ENCODE measurements at regions of chr16 and their contacts with region 1.

Region 1: GRCh38 chr16:3400779-3401688 is at the starts of genes ZNF174 and ZSCAN32:
- DNase-seq: peak; percentile 99
- H3K4me3 Mint-ChIP-seq: peak within 1 kb of the TSS; percentile 91
- H3K27ac Mint-ChIP-seq: peak within 1 kb of the TSS; percentile 76
- H3K4me1 Mint-ChIP-seq: peaks cover 18% of the 10 kb centered on the region
- H3K27me3 Mint-ChIP-seq: no peaks in the 10 kb centered on the region
- total RNA-seq, gene ZNF174: 9.2 and 11.1 TPM in 2 replicates
- total RNA-seq, gene ZSCAN32: 13.2 and 16.1 TPM in 2 replicates

Region 2: DNA sequence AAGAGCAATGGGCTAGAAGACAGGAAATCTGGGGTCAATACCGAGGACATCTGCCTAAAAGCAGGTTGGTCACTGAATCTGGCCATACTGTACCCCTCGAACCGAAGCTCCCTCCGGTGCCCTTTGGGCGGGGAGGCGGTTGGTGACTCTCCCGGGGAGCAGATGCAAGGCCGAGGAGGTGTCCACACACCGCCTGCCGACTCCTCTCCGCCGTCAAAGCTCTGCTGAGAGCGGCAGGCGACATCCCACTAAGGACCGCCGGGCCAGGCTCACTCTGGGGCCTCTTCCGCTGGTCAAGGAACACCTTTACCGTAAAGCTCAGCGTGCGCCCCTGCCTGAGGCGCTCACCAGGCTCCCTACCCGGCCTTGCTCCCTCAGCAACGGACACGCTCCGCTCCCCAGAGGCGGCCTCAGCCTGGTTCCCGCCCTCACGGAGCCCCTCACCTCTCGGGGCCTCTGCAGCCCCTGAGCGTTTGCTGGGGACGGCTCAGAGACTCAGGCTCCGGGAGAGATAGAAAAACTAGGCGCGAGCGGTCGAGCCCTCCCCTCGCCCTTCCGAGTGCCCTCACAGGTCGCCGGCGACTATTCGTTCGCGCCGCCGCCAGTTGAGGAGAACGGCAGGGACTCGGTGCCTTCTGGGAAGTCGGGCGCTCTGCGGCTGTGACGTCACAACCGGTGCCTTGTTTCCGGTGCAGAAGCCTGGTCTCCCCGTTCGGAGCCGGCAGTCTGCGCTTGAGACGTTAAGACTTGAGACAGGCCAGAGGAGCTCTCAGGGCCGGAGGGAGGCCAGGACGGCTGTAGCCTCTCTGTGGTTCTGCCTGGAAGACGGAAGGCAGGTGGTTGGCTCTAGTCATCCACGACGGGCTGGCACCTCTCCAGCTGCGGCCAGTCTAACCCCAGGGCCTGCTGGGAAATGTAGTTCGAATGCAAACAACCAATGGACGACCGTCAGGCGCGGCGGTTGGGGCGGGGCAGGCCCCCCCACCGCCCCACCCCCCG is 166.2 kb before region 1 on chr16 and contains the start of gene ZNF200:
- intact Hi-C with region 1: loop called (anchors 2 kb)
- DNase-seq: peak; percentile 91
- H3K4me3 Mint-ChIP-seq: peak within 1 kb of the TSS; percentile 97
- H3K27ac Mint-ChIP-seq: peak within 1 kb of the TSS; percentile 91
- H3K4me1 Mint-ChIP-seq: peaks cover 15% of the 10 kb centered on the region
- H3K27me3 Mint-ChIP-seq: peaks cover 2% of the 10 kb centered on the region
- total RNA-seq, gene ZNF200: 11.0 and 12.2 TPM in 2 replicates

Region 3: GRCh38 chr16:3264137-3265036 is 136.6 kb before region 1 on chr16:
- intact Hi-C with region 1: loop called (anchors 1 kb)
- DNase-seq: peak; percentile 97
- H3K4me3 Mint-ChIP-seq: peak overlapping the region; percentile 89
- H3K27ac Mint-ChIP-seq: peak overlapping the region; percentile 88
- H3K4me1 Mint-ChIP-seq: peaks cover 8% of the 10 kb centered on the region
- H3K27me3 Mint-ChIP-seq: no peaks in the 10 kb centered on the region

Region 4: GRCh38 chr16:3305109-3306068 is 95.6 kb before region 1 on chr16 and contains the starts of genes TIGD7 and ZNF75A:
- intact Hi-C with region 1: loop called (anchors 1 kb)
- DNase-seq: peak; percentile 83
- H3K4me3 Mint-ChIP-seq: peak within 1 kb of the TSS; percentile 77
- H3K27ac Mint-ChIP-seq: peak within 1 kb of the TSS; percentile 78
- H3K4me1 Mint-ChIP-seq: peaks cover 8% of the 10 kb centered on the region
- H3K27me3 Mint-ChIP-seq: no peaks in the 10 kb centered on the region
- total RNA-seq, gene TIGD7: 2.5 and 3.6 TPM in 2 replicates
- total RNA-seq, gene ZNF75A: 25.4 and 31.8 TPM in 2 replicates

Region 5: DNA sequence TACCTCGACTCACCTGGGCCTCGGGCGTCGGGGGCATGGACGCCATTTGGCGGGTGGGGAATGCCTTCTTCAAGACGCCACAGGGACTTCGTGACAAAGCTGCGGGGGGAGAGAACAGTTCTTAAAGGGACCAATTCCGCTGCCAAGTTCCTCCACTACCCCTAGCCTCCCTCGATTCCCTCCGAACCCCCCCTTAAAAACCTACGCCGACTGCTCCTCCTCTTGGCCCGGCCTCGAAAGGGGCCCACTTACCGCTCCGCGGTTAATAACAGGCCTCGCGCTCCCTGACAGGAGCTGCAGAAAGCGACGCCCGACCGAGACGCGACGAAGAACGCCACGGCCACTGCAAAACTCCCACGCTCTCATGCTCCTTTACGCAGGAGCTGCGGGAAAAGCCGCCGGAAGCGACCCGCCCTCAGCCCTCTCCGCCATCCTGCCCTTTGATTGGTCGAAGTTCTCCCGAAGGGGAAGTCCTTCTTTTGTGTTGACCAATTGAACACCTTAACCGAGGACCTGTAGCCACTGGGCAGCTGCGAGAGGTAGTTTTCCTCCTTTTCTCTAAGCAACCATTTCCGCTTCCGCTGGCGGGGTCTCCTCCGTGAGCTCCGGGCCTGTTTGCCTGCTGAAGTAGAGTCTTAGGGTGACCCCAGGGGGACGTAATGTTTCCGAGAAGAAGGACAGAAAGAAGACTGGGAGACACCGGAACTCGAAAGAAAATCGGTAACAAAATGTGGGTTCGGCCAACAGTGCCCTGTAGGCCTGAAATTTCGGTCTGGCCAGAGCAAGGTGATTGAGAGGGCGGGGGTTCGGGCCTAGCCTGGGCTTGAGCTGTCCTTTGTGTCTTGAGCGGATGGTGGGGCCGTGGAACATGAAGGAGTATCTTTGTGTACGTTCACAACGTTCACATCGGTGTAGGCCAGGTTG is 42.3 kb after region 1 on chr16 and contains the starts of genes NAA60 and ZNF597:
- intact Hi-C with region 1: loop called (anchors 1 kb)
- DNase-seq: peak; percentile 79
- H3K4me3 Mint-ChIP-seq: peak within 1 kb of the TSS; percentile 97
- H3K27ac Mint-ChIP-seq: peak within 1 kb of the TSS; percentile 97
- H3K4me1 Mint-ChIP-seq: peaks cover 14% of the 10 kb centered on the region
- H3K27me3 Mint-ChIP-seq: no peaks in the 10 kb centered on the region
- total RNA-seq, gene NAA60: 31.0 and 36.2 TPM in 2 replicates
- total RNA-seq, gene ZNF597: 1.8 and 1.9 TPM in 2 replicates

Region 6: DNA sequence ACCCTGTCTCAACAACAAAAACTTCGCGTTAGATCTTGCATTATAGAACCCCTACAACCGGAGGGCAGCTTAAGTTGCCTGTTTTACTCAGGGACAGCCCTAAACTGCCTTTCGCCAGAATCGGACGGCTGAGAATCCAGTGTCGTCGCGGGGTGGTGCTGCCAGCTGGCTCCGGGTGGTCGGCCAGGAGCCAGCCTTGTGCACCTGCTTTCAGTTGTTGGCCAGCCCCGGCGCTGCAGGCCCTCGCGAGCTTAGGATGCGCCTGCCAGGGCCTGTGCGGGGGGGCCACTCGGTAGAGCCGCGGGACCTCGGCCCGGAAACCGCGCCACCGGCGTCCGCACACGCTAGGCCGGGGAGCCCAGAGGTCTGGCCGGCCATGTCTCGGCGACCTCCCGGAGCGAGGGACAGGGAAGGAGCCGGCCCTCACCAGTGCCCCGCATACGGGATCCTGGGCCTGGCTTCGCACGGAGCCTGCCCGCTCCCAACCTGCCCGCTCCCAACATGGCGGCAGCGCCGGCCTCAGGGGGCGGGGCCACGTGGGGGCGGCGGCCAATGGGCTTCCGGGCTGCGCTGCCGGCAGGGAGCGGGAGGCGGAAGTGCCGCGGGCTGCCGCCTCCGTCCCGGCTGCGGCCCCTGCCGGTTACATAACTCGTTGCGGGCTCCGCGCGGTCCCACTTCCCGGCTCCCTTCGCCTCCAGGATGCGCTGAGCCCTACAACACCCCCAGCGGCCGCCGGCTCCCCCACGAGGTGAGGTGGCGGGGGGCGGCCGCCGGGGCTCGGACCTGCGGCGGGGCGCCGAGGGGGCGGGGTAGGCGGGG is 56.6 kb after region 1 on chr16:
- intact Hi-C with region 1: loop called (anchors 1 kb)
- DNase-seq: peak; percentile 86
- H3K4me3 Mint-ChIP-seq: peak overlapping the region; percentile 80
- H3K27ac Mint-ChIP-seq: peak overlapping the region; percentile 70
- H3K4me1 Mint-ChIP-seq: peaks cover 35% of the 10 kb centered on the region
- H3K27me3 Mint-ChIP-seq: no peaks in the 10 kb centered on the region

Measured in activated T-helper 2 cell treated with anti-CD3 and anti-CD28 coated beads, Interferon-gamma antibody, Interleukin-2, Interleukin-4, amounts not matched to agents 10 μg/mL and 5 μg/mL and 100 μg/mL, durations not matched to agents 14 hours and 24 hours and 36 hours (primary cell).